Heart left ventricle (tissue), 16 donors: ENCODE measurements at regions of chr17 and their contacts with region 1.

Region 1: DNA sequence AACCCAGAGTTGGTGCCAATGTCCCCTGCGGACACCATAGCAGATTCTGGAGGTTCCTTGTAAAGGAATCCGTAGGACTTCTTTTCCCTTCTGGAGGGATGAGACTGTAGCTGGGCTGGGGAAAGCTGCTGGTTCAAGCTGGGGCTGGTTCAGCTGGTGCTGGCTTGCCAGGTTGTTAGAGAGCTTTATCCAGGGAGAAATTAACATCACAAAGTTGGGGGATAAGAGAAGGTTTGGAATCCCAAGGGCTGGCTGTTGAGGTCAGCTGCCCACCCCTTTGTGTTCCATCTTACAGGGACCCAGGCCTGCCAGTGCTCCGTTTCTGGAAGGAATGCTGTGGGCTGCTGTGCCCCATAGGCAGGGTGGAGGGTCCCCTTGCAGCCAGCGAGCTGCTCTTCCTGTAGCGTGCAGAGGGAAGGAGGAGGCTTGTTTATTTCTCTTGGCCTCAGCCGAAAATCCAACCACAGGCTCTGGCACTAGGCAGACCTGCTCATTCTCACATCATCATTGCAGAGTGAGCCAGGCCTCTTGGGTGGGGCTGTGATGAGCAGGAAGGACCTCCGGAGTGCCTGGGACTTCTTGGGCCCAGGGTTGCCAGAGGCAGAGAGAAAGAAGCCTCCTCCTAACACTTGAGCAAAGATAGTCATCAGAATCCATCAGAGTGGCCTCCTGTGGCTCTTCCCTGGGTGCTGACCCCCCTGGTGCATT is 251.1 kb downstream of the SEC14L1 start:
- DNase-seq: peak in 2 of 5 donors; percentile 73 to 74
- ATAC-seq: peak in 2 of 4 donors; percentile 27 to 39
- H3K4me3 ChIP-seq: peak overlapping the region in 2 of 12 donors; percentile 7 to 9
- H3K27ac ChIP-seq: peak overlapping the region; percentile 38 to 96 (median 74)
- H3K4me1 ChIP-seq: peaks cover 26 to 87% (median 79%) of the 10 kb centered on the region in 12 donors
- H3K27me3 ChIP-seq: no peaks in the 10 kb centered on the region
- CTCF ChIP-seq: no peak
- POLR2A ChIP-seq: no peak

Region 2: DNA sequence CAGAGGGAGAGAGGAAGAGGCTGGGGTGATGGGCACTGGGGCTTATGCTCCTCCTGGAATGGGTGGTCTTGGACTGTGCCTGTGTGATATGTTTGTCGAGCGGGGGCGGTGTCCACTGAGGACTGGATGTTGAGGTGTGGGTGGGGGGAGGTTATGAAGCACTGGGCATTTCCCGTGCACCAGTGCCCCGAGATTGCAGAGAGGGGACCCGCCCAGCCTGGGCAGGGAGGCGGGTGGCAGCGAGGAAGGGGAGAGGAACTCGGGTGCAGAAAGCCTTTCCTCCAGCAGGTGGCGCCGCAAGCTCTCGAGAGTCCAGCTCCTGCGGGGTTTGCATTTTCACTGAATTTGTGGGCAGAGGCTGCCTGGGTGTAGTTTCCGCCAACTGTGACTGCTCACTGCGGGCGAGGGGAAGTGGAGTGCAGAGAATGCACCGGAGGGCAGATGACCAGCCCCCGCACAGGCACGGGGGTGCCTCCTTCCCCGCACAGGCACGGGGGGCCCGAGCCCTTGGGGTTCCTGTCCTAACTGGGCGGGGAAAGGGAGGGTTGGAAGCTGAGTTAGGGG is 60.4 kb before region 1 on chr17:
- intact Hi-C with region 1: loop called in 1 of 10 experiments (anchors 5 kb)
- DNase-seq: peak; percentile 91 to 96 (median 92)
- ATAC-seq: peak; percentile 74 to 92 (median 88)
- H3K4me3 ChIP-seq: peak overlapping the region in 7 of 12 donors; percentile 21 to 45 (median 41)
- H3K27ac ChIP-seq: peak overlapping the region in 9 of 12 donors; percentile 2 to 85 (median 55)
- H3K4me1 ChIP-seq: peaks cover 0 to 31% (median 9%) of the 10 kb centered on the region in 12 donors
- H3K27me3 ChIP-seq: no peaks in the 10 kb centered on the region
- CTCF ChIP-seq: peak; percentile 93 to 98 (median 94)
- POLR2A ChIP-seq: no peak